ENCODE measurements at regions of chr9 and their contacts with region 1.

Region 1: GRCh38 chr9:114405294-114406034 is 17.7 kb upstream of the AKNA start:
- DNase-seq: peak; percentile 62
- ATAC-seq: peak; percentile 99
- H3K4me3 Mint-ChIP-seq: no peak overlapping the region
- H3K27ac Mint-ChIP-seq: no peak overlapping the region
- H3K4me1 Mint-ChIP-seq: peaks cover 6% of the 10 kb centered on the region
- H3K27me3 Mint-ChIP-seq: no peaks in the 10 kb centered on the region
- CTCF ChIP-seq: peak; percentile 29

Region 2: DNA sequence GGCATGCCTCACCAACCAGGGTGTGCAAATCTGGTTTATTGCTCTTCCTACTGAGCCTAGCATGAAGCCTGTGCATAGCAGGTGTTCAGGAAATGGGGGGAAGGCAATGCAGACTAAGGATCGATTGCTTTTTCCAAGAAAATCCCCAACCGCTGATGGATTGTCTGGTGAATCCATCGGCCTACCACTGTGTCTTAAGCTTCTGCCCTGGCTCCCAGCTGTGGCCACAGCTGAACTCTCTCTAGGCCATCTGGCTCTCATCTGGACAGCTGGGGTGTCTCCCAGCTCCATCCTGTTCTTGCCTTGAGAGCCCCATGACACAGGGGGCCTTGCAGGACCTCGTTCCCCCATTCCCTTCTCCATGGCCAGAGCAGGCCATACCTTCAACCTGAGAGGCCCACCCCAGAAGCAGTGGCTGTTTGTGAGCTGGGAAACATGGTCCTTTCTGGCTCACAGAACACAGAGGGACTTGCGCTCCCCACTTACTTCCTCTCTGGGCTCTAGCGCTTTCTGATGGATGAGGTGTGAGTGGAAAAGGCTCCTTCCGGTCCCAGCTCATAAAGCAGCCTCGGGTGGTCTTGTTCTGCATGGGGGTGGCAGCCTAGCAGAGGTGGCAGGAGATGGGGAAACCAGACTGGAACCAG is 208.4 kb before region 1 on chr9:
- CTCF ChIA-PET with region 1: no interaction called
- POLR2A ChIA-PET with region 1: no interaction called
- intact Hi-C with region 1: no loop called
- DNase-seq: no peak
- ATAC-seq: no peak
- H3K4me3 Mint-ChIP-seq: no peak overlapping the region
- H3K27ac Mint-ChIP-seq: no peak overlapping the region
- H3K4me1 Mint-ChIP-seq: no peaks in the 10 kb centered on the region
- H3K27me3 Mint-ChIP-seq: peaks cover 8% of the 10 kb centered on the region
- CTCF ChIP-seq: no peak

Region 3: DNA sequence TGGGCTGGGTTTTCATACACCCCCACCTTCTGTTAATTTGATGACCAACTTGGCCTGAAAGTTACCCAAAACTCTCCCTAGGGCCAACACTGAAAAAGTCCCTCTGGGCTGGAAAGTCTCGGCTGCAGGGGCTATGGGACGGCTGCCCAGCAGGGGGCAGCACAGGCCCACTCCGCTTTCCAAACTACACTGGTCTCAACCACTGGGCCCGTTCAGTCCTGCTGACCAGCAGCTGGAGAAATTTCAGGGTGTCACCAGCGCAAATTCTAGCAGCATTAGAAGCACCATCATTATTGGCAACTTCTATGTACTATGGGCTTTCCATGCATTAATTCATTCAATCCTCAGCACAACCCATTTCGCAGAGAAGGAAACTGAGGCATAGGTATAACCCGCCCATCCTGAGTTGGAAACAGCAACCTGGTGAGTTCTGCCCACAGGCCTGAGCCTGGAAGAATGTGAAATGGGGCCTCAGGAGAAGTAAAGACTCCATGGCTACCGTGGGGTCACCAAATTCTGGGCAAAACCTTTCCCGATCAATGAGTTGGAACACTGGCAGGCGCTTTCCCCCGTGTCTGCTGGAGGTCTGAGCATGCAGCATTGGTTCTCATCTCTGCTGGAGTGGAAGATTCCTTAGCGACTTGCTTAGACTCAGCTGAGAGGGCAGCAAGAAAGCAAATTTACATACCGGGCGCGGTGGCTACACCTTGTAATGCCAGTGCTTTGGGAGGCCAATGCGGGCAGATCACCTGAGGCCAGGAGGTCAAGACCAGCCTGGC is 66.1 kb before region 1 on chr9:
- CTCF ChIA-PET with region 1: interaction called, 29 read pairs
- POLR2A ChIA-PET with region 1: no interaction called
- intact Hi-C with region 1: loop called (anchors 1 kb)
- DNase-seq: peak; percentile 68
- ATAC-seq: peak; percentile 79
- H3K4me3 Mint-ChIP-seq: peak overlapping the region; percentile 6
- H3K27ac Mint-ChIP-seq: peak overlapping the region; percentile 74
- H3K4me1 Mint-ChIP-seq: peaks cover 32% of the 10 kb centered on the region
- H3K27me3 Mint-ChIP-seq: no peaks in the 10 kb centered on the region
- CTCF ChIP-seq: peak; percentile 87

Region 4: DNA sequence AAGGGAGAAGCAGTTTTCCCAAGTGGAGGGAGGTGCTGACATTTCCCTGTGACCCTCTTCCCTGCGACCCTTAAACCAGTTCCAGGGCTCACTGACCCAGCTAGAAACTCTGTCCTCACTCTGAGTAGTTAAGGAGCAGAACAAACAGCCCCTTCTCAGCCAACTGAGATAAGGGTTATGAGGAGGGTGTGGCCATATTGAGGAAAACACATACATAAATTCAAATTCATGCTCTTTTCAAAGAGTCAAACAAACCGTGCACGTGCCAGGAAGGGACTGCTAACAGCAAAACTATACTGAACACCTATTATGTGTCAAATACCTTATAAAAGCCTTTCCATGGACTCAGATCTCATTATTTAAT is 12.7 kb before region 1 on chr9:
- CTCF ChIA-PET with region 1: interaction called, 6 read pairs
- POLR2A ChIA-PET with region 1: interaction called, 311 read pairs
- intact Hi-C with region 1: no loop called
- DNase-seq: no peak
- ATAC-seq: no peak
- H3K4me3 Mint-ChIP-seq: no peak overlapping the region
- H3K27ac Mint-ChIP-seq: peak overlapping the region; percentile 93
- H3K4me1 Mint-ChIP-seq: peaks cover 97% of the 10 kb centered on the region
- H3K27me3 Mint-ChIP-seq: no peaks in the 10 kb centered on the region
- CTCF ChIP-seq: no peak

Region 5: GRCh38 chr9:114487607-114488300 is 82.3 kb after region 1 on chr9:
- CTCF ChIA-PET with region 1: interaction called, 5 read pairs
- POLR2A ChIA-PET with region 1: no interaction called
- intact Hi-C with region 1: loop called (anchors 1 kb)
- DNase-seq: no peak
- ATAC-seq: peak; percentile 85
- H3K4me3 Mint-ChIP-seq: no peak overlapping the region
- H3K27ac Mint-ChIP-seq: no peak overlapping the region
- H3K4me1 Mint-ChIP-seq: peaks cover 39% of the 10 kb centered on the region
- H3K27me3 Mint-ChIP-seq: no peaks in the 10 kb centered on the region
- CTCF ChIP-seq: peak; percentile 41

Region 6: GRCh38 chr9:114653556-114654159 is 248.2 kb after region 1 on chr9:
- CTCF ChIA-PET with region 1: interaction called, 126 read pairs
- POLR2A ChIA-PET with region 1: interaction called, 5 read pairs
- intact Hi-C with region 1: loop called (anchors 1 kb)
- DNase-seq: peak; percentile 55
- ATAC-seq: peak; percentile 98
- H3K4me3 Mint-ChIP-seq: no peak overlapping the region
- H3K27ac Mint-ChIP-seq: no peak overlapping the region
- H3K4me1 Mint-ChIP-seq: peaks cover 23% of the 10 kb centered on the region
- H3K27me3 Mint-ChIP-seq: no peaks in the 10 kb centered on the region
- CTCF ChIP-seq: peak; percentile 61

Region 7: DNA sequence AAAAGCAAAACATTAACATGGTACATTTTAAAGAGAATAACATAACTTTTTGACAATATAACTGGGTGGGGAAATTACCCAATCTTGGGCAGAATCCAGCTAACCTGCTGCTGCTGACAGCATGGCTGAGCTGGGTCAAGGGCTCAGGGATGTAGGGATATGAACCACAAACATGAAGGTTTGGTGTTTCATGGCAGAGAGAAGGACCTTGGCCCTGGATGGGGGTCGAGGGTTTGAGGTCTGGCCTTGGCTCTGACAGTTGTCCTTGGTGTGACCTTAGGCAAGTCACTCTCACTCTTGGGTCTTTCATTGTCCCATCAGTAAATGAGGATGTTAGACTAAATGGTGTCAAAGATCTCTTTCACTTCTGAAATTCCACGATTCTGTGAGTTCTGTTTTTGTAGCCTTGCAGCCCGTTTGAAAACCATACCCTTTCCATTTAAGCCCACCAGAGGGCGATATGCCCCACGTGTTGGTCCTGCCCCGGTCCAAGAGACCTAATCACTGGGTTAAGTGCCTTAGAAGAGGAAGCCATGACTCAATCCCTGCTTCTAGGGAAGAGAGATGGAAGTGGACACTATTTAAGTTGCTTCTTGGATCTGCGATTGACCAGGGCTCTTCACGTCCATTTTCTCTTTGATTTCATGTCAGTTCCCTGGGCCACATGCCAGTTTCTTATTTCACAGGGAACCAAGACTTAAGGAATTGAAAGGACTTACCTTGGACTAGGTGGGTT is 333.3 kb after region 1 on chr9:
- CTCF ChIA-PET with region 1: interaction called, 8 read pairs
- POLR2A ChIA-PET with region 1: no interaction called
- intact Hi-C with region 1: loop called (anchors 1 kb)
- DNase-seq: peak; percentile 36
- ATAC-seq: peak; percentile 89
- H3K4me3 Mint-ChIP-seq: no peak overlapping the region
- H3K27ac Mint-ChIP-seq: peak overlapping the region; percentile 46
- H3K4me1 Mint-ChIP-seq: peaks cover 14% of the 10 kb centered on the region
- H3K27me3 Mint-ChIP-seq: peaks cover 3% of the 10 kb centered on the region
- CTCF ChIP-seq: peak; percentile 64

Region 8: GRCh38 chr9:114754581-114754980 is 349.1 kb after region 1 on chr9:
- CTCF ChIA-PET with region 1: no interaction called
- POLR2A ChIA-PET with region 1: no interaction called
- intact Hi-C with region 1: no loop called
- DNase-seq: no peak
- ATAC-seq: peak; percentile 92
- H3K4me3 Mint-ChIP-seq: peak overlapping the region; percentile 1
- H3K27ac Mint-ChIP-seq: peak overlapping the region; percentile 65
- H3K4me1 Mint-ChIP-seq: peaks cover 32% of the 10 kb centered on the region
- H3K27me3 Mint-ChIP-seq: no peaks in the 10 kb centered on the region
- CTCF ChIP-seq: no peak

Region 9: GRCh38 chr9:115013998-115014397 is 608.5 kb after region 1 on chr9:
- CTCF ChIA-PET with region 1: interaction called, 15 read pairs
- POLR2A ChIA-PET with region 1: no interaction called
- intact Hi-C with region 1: loop called (anchors 1 kb)
- DNase-seq: peak; percentile 46
- ATAC-seq: peak; percentile 79
- H3K4me3 Mint-ChIP-seq: no peak overlapping the region
- H3K27ac Mint-ChIP-seq: no peak overlapping the region
- H3K4me1 Mint-ChIP-seq: peaks cover 5% of the 10 kb centered on the region
- H3K27me3 Mint-ChIP-seq: peaks cover 8% of the 10 kb centered on the region
- CTCF ChIP-seq: no peak

Measured in activated B cell treated with CpG ODN at 0.5 μM for 24 hours (primary cell).